Posterior vena cava (tissue), 2 donors: ENCODE measurements at regions of chr11 and their contacts with region 1.

Region 1: GRCh38 chr11:44342616-44343015 is 32.7 kb upstream of the ALX4 start:
- DNase-seq: peak; percentile 65

Region 2: DNA sequence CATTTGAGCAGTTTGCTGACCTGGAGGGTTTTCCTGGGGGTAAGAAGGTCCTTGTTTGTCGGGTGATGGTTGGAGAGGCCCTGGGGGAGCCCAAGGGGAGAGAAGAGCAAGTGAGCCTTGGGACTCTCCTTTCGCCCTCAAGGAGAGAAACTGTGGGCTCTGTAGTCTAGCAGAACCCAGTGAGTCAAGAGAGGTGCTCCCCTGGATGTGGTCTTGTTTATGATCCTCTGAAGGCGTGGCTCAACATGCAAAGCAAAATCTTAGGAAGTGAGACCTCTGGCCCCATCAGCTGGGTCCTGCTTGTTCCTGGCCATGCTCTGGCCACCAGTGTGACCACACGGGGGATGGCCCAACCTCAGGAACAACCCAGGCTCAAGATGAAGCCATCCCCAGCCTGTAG is 33.8 kb after region 1 on chr11:
- intact Hi-C with region 1: loop called in 1 of 2 experiments (anchors 1 kb)
- DNase-seq: no peak